ENCODE measurements at regions of chr7 and their contacts with region 1.

Region 1: GRCh38 chr7:29408841-29409243 is 154.8 kb upstream of the PRR15 start:
- DNase-seq: no peak
- ATAC-seq: peak; percentile 51 to 59
- H3K4me3 ChIP-seq: no peak overlapping the region
- H3K27ac ChIP-seq: no peak overlapping the region
- H3K4me1 ChIP-seq: no peaks in the 10 kb centered on the region
- H3K27me3 ChIP-seq: no peaks in the 10 kb centered on the region
- CTCF ChIP-seq: peak; percentile 64 to 88 (median 80)
- POLR2A ChIP-seq: no peak

Region 2: GRCh38 chr7:28661826-28662595 is 746.8 kb before region 1 on chr7:
- in situ Hi-C with region 1: no loop called
- intact Hi-C with region 1: no loop called
- DNase-seq: no peak
- ATAC-seq: no peak
- H3K4me3 ChIP-seq: no peak overlapping the region
- H3K27ac ChIP-seq: no peak overlapping the region
- H3K4me1 ChIP-seq: no peaks in the 10 kb centered on the region
- H3K27me3 ChIP-seq: no peaks in the 10 kb centered on the region
- CTCF ChIP-seq: no peak
- POLR2A ChIP-seq: no peak

Region 3: GRCh38 chr7:28921822-28922221 is 487.0 kb before region 1 on chr7:
- in situ Hi-C with region 1: loop called (anchors 5 kb)
- intact Hi-C with region 1: loop called (anchors 1 kb)
- DNase-seq: peak in 1 of 2 donors; percentile 29
- ATAC-seq: peak; percentile 96 to 97
- H3K4me3 ChIP-seq: no peak overlapping the region
- H3K27ac ChIP-seq: no peak overlapping the region
- H3K4me1 ChIP-seq: peaks cover 0 to 4% of the 10 kb centered on the region in 2 donors
- H3K27me3 ChIP-seq: peaks cover 0 to 7% (median 0%) of the 10 kb centered on the region in 3 donors
- CTCF ChIP-seq: peak; percentile 70 to 92 (median 76)
- POLR2A ChIP-seq: no peak

Region 4: GRCh38 chr7:28926871-28927597 is 481.8 kb before region 1 on chr7:
- in situ Hi-C with region 1: loop called (anchors 5 kb)
- intact Hi-C with region 1: loop called (anchors 1 kb)
- DNase-seq: peak; percentile 43 to 47
- ATAC-seq: peak; percentile 82 to 91
- H3K4me3 ChIP-seq: peak overlapping the region; percentile 47 to 67 (median 55)
- H3K27ac ChIP-seq: peak overlapping the region in 3 of 4 donors; percentile 17 to 56 (median 44)
- H3K4me1 ChIP-seq: peaks cover 0 to 8% of the 10 kb centered on the region in 2 donors
- H3K27me3 ChIP-seq: peaks cover 0 to 8% (median 0%) of the 10 kb centered on the region in 3 donors
- CTCF ChIP-seq: peak; percentile 68 to 84 (median 70)
- POLR2A ChIP-seq: no peak

Region 5: GRCh38 chr7:29017713-29018112 is 391.1 kb before region 1 on chr7:
- in situ Hi-C with region 1: no loop called
- intact Hi-C with region 1: loop called (anchors 10 kb)
- DNase-seq: no peak
- ATAC-seq: no peak
- H3K4me3 ChIP-seq: no peak overlapping the region
- H3K27ac ChIP-seq: no peak overlapping the region
- H3K4me1 ChIP-seq: peaks cover 3 to 19% of the 10 kb centered on the region in 2 donors
- H3K27me3 ChIP-seq: no peaks in the 10 kb centered on the region
- CTCF ChIP-seq: no peak
- POLR2A ChIP-seq: no peak

Region 6: DNA sequence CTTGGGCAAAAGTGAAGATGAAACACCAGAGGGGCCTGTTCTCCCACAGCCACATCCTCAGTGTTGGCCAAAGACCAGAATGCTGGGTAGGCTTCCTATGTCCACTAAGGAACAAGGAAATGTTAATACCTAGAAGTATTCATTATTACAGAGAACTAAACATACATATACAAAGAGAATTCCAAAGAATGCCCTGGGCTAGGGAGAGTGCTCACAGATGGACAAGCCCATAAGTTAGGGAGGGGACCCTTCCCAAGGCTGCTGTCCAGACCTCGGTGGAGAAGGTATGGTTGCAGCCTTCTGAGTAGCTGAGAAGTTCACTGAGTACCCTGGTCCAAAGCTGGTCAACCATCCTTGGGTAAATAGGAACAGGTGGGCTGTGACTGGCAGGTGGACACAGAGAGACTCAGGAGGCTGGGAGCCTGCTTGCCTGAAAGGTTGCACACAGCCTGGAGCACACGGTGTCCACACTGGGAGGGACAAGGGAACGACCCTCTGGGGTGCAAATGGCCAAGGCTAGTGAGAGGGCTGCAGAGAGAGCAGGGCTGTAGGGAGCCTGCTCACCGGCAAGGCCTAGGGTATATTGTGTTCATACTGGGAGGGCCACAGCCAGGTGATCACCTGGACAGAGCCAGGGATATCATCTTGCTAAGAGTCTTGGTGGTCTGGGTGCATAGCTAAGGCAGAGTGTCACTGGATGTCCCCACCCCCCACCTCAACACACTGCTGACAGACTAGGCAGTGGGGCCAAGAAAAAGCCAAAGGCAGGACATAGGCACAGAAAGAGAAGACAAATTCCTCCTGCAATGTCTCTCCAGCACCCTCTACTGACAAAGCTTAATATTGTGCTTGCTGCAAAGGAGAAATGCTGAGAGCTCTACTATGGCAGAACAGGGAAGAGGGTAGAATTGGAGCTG is 302.8 kb before region 1 on chr7:
- in situ Hi-C with region 1: loop called (anchors 5 to 10 kb)
- intact Hi-C with region 1: loop called (anchors 5 kb)
- DNase-seq: peak in 1 of 2 donors; percentile 24
- ATAC-seq: peak; percentile 80 to 87
- H3K4me3 ChIP-seq: no peak overlapping the region
- H3K27ac ChIP-seq: no peak overlapping the region
- H3K4me1 ChIP-seq: peaks cover 2 to 4% of the 10 kb centered on the region in 2 donors
- H3K27me3 ChIP-seq: no peaks in the 10 kb centered on the region
- CTCF ChIP-seq: peak; percentile 54 to 84 (median 68)
- POLR2A ChIP-seq: no peak

Region 7: DNA sequence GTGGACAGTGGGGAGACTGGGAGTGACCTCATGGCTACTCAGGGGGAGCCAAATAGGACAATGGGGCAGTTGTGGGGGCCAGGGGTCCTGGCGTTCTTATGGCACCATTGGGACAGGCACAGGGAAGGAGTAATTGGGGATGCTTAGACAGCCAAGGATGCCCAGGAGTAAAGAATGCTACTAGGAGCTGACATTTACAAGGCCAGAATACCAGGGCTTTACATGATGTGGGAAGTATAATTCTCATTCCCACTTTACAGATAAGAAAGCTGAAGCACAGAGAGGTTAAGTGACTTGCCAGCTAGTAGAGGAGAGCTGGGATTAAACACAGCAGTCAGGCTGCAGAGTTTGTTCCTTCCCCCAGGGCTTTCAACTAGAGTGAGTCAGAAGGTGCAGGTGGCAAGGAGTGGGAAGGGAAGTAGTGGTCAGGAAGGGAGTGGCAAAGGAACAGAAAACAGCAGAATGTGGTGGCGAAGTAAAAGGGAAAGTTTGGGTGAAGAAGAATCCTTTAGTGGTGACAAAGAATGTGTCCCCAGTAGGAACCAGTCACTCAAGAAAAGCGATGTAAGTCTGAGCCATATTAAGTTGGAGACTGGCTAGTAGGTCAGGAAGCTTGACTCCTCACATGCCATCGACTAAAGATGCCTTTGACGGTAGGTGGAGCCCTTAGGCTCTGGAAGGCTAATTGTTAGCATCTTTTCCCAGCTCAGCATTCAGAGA is 295.3 kb before region 1 on chr7:
- in situ Hi-C with region 1: loop called (anchors 5 to 10 kb)
- intact Hi-C with region 1: loop called (anchors 5 kb)
- DNase-seq: no peak
- ATAC-seq: no peak
- H3K4me3 ChIP-seq: no peak overlapping the region
- H3K27ac ChIP-seq: no peak overlapping the region
- H3K4me1 ChIP-seq: no peaks in the 10 kb centered on the region
- H3K27me3 ChIP-seq: no peaks in the 10 kb centered on the region
- CTCF ChIP-seq: no peak
- POLR2A ChIP-seq: no peak

Region 8: GRCh38 chr7:29189743-29190201 is 219.1 kb before region 1 on chr7:
- in situ Hi-C with region 1: loop called in 3 of 4 experiments (anchors 5 to 25 kb)
- intact Hi-C with region 1: loop called (anchors 2 kb)
- DNase-seq: no peak
- ATAC-seq: no peak
- H3K4me3 ChIP-seq: no peak overlapping the region
- H3K27ac ChIP-seq: no peak overlapping the region
- H3K4me1 ChIP-seq: peaks cover 0 to 8% of the 10 kb centered on the region in 2 donors
- H3K27me3 ChIP-seq: peaks cover 0 to 6% (median 0%) of the 10 kb centered on the region in 3 donors
- CTCF ChIP-seq: peak; percentile 41 to 79 (median 68)
- POLR2A ChIP-seq: no peak

Measured in gastrocnemius medialis (tissue), 4 donors.